ENCODE measurements at regions of chr11 and their contacts with region 1.

Region 1: GRCh38 chr11:69471329-69472052 is 10.0 kb upstream of the LINC01488 start:
- DNase-seq: peak; percentile 58

Region 2: GRCh38 chr11:69775163-69775755 is 303.8 kb after region 1 on chr11 and contains the start of gene FGF4:
- intact Hi-C with region 1: loop called in 1 of 2 experiments (anchors 10 kb)
- DNase-seq: no peak
- total RNA-seq, gene FGF4: not detected

Measured in posterior vena cava (tissue), 2 donors.